IMR-90 (cell line): ENCODE measurements at regions of chr7 and their contacts with region 1.

Region 1: GRCh38 chr7:122014697-122015096 is 129.4 kb downstream of the AASS start:
- DNase-seq: no peak
- ATAC-seq: no peak
- H3K4me3 ChIP-seq: no peak overlapping the region
- H3K27ac ChIP-seq: no peak overlapping the region
- H3K4me1 ChIP-seq: no peaks in the 10 kb centered on the region
- H3K27me3 ChIP-seq: no peaks in the 10 kb centered on the region
- CTCF ChIP-seq: peak; percentile 31; the same call in 1 of the 2 replicates
- POLR2A ChIP-seq: no peak
- RAD21 ChIP-seq: peak; percentile 27; the same call in 1 of the 2 replicates

Region 2: DNA sequence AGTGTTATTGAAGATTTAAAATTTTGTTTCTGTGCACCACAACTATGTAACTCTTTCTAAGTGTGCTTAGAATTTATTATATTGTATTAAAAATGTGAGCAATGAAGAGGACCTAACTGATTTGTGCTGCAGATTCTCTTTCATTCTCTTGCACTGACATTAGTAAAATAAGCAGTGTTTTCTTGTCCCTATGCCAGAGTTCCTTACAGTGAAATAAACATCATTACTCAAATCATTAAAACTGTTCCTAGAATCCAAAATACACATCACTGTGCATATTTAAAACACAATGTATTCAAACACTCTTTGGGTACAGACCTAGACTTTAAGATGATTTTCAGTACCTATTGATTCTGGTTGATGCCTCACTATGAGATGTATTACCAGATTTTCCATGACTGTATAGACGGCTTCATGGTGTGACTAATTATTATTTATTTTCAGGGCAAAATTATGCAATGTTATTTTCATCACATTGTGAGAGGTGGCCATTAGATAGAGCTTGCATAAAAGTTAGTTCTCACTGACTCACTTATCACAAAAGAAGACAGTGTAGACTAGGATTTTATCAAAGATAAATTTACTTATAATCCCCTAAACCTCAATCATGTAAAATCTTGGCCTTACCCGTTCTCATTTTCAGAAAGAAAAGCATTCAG is 48.3 kb before region 1 on chr7:
- CTCF ChIA-PET with region 1: no interaction called
- POLR2A ChIA-PET with region 1: no interaction called
- dilution Hi-C with region 1: no loop called
- in situ Hi-C with region 1: no loop called
- intact Hi-C with region 1: no loop called
- DNase-seq: no peak
- ATAC-seq: no peak
- H3K4me3 ChIP-seq: no peak overlapping the region
- H3K27ac ChIP-seq: no peak overlapping the region
- H3K4me1 ChIP-seq: no peaks in the 10 kb centered on the region
- H3K27me3 ChIP-seq: no peaks in the 10 kb centered on the region
- CTCF ChIP-seq: no peak
- POLR2A ChIP-seq: no peak
- RAD21 ChIP-seq: no peak

Region 3: GRCh38 chr7:122528879-122529481 is 514.3 kb after region 1 on chr7:
- CTCF ChIA-PET with region 1: no interaction called
- POLR2A ChIA-PET with region 1: no interaction called
- dilution Hi-C with region 1: no loop called
- in situ Hi-C with region 1: loop called (anchors 10 kb)
- intact Hi-C with region 1: loop called (anchors 2 kb)
- DNase-seq: peak; percentile 37
- ATAC-seq: no peak
- H3K4me3 ChIP-seq: no peak overlapping the region
- H3K27ac ChIP-seq: no peak overlapping the region
- H3K4me1 ChIP-seq: no peaks in the 10 kb centered on the region
- H3K27me3 ChIP-seq: no peaks in the 10 kb centered on the region
- CTCF ChIP-seq: peak; percentile 56
- POLR2A ChIP-seq: no peak
- RAD21 ChIP-seq: peak; percentile 34

Region 4: DNA sequence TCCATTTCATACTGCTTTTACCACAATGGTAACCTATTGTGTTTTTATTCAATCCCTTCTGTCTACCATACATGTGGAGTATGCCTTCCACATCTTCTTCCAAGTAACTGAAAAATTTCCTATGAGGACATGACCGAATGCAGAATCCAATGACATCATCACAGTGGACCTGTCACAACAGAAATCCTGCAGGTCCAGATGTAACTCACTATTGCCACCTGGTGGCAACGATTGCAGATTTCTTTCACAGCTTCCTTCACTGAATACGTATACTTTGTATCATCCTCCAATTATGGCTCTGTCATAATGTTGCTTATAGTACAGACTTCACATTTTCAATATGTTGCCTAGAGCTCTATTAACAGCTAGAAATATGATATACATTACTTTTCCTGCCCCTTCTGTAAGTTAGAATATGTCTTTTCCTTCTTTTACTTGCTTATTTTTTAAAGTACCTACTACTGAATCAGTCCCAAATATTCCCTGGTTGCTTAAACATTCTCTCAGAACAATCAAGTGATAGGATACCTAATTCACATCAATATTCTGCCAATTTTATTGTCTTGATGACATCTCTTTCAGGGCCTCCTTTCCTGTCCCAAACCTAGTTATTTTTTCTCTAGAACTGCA is 1139.6 kb after region 1 on chr7:
- CTCF ChIA-PET with region 1: no interaction called
- POLR2A ChIA-PET with region 1: no interaction called
- dilution Hi-C with region 1: no loop called
- in situ Hi-C with region 1: no loop called
- intact Hi-C with region 1: loop called (anchors 5 kb)
- DNase-seq: peak; percentile 50
- ATAC-seq: no peak; the same call in 1 of the 2 replicates
- H3K4me3 ChIP-seq: no peak overlapping the region
- H3K27ac ChIP-seq: no peak overlapping the region
- H3K4me1 ChIP-seq: no peaks in the 10 kb centered on the region
- H3K27me3 ChIP-seq: no peaks in the 10 kb centered on the region
- CTCF ChIP-seq: peak; percentile 51
- POLR2A ChIP-seq: no peak
- RAD21 ChIP-seq: peak; percentile 34; the same call in 1 of the 2 replicates